Common myeloid progenitor, CD34-positive (primary cell): ENCODE measurements at regions of chr6 and their contacts with region 1.

Region 1: GRCh38 chr6:32432050-32432450 is 7.6 kb upstream of the HLA-DRA start:
- DNase-seq: peak; percentile 60 to 69 (median 63)
- H3K4me3 ChIP-seq: no peak overlapping the region
- H3K27ac ChIP-seq: no peak overlapping the region
- H3K4me1 ChIP-seq: peaks cover 2 to 8% (median 5%) of the 10 kb centered on the region in 4 experiments
- H3K27me3 ChIP-seq: no peaks in the 10 kb centered on the region

Region 2: GRCh38 chr6:32692019-32692418 is 260.0 kb after region 1 on chr6:
- CTCF ChIA-PET with region 1: interaction called, 16 read pairs
- POLR2A ChIA-PET with region 1: no interaction called
- DNase-seq: peak; percentile 17 to 68 (median 68)
- H3K4me3 ChIP-seq: no peak overlapping the region
- H3K27ac ChIP-seq: no peak overlapping the region
- H3K4me1 ChIP-seq: peaks cover 0 to 9% (median 1%) of the 10 kb centered on the region in 4 experiments
- H3K27me3 ChIP-seq: no peaks in the 10 kb centered on the region

Region 3: GRCh38 chr6:32700391-32701040 is 268.5 kb after region 1 on chr6:
- CTCF ChIA-PET with region 1: interaction called, 33 read pairs
- POLR2A ChIA-PET with region 1: no interaction called
- DNase-seq: peak; percentile 51 to 63 (median 60)
- H3K4me3 ChIP-seq: peak overlapping the region in 3 of 7 experiments; percentile 23 to 53 (median 36)
- H3K27ac ChIP-seq: no peak overlapping the region
- H3K4me1 ChIP-seq: peaks cover 0 to 4% (median 2%) of the 10 kb centered on the region in 4 experiments
- H3K27me3 ChIP-seq: peaks cover 0 to 6% (median 0%) of the 10 kb centered on the region in 5 experiments